ENCODE measurements at regions of chr5 and their contacts with region 1.

Region 1: GRCh38 chr5:61534481-61535267 is 202.6 kb downstream of the ZSWIM6 start:
- DNase-seq: no peak
- ATAC-seq: no peak
- H3K4me3 ChIP-seq: no peak overlapping the region
- H3K27ac ChIP-seq: no peak overlapping the region
- H3K4me1 ChIP-seq: no peaks in the 10 kb centered on the region
- H3K27me3 ChIP-seq: no peaks in the 10 kb centered on the region
- CTCF ChIP-seq: no peak
- POLR2A ChIP-seq: no peak

Region 2: GRCh38 chr5:61449804-61450492 is 84.7 kb before region 1 on chr5:
- in situ Hi-C with region 1: no loop called
- intact Hi-C with region 1: loop called (anchors 10 kb)
- DNase-seq: no peak
- ATAC-seq: no peak
- H3K4me3 ChIP-seq: no peak overlapping the region
- H3K27ac ChIP-seq: peak overlapping the region in 1 of 4 donors; percentile 18
- H3K4me1 ChIP-seq: peaks cover 21 to 22% of the 10 kb centered on the region in 2 donors
- H3K27me3 ChIP-seq: no peaks in the 10 kb centered on the region
- CTCF ChIP-seq: no peak
- POLR2A ChIP-seq: no peak